ENCODE measurements at regions of chr11 and their contacts with region 1.

Region 1: DNA sequence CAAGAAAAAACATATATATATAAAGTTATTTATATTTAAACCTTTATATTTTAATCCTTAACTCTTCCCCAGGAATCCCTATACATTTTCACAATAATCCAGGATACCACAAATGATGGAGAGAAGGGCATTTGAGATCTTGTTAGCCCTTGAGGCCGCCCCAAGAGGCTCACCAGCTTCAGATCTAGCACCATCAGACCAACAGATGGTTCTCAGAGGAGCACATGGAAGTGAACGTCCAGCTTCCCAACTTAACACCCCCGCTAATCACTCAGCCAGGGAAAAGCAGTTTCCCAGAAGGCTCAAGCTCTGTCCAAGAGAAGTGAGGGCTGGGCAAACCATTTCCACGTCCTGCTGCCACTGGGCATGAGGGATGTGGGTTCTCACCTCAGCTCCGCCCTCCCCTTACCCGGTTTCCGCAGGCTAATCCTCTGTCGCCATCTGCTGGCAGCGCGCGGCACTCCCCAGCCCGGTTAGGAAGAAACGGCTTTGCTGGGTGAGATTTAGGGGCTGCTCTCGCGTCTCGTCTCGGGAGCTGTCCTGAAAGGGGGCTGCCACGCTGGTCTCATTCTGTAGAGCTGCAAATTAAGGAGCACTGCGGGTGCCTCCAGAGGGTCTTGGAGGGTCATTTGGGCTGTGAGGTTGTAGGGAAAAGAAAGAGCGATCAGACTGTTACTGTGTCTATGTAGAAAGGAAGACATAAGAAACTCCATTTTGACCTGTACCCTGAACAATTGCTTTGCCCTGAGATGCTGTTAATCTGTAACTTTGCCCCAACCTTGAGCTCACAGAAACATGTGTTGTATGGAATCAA is 6.8 kb upstream of the FAM111A start:
- DNase-seq: peak; percentile 66
- ATAC-seq: peak; percentile 100
- H3K4me3 ChIP-seq: no peak overlapping the region
- H3K27ac ChIP-seq: 0 out of 2 replicates have a peak overlapping the region, but pooled peaks have one; percentile 4
- H3K4me1 ChIP-seq: no peaks in the 10 kb centered on the region
- H3K27me3 ChIP-seq: no peaks in the 10 kb centered on the region
- CTCF ChIP-seq: peak; percentile 97
- POLR2A ChIP-seq: 0 out of 2 replicates have a peak, but pooled peaks have one; percentile 51
- RAD21 ChIP-seq: peak; percentile 98

Region 2: DNA sequence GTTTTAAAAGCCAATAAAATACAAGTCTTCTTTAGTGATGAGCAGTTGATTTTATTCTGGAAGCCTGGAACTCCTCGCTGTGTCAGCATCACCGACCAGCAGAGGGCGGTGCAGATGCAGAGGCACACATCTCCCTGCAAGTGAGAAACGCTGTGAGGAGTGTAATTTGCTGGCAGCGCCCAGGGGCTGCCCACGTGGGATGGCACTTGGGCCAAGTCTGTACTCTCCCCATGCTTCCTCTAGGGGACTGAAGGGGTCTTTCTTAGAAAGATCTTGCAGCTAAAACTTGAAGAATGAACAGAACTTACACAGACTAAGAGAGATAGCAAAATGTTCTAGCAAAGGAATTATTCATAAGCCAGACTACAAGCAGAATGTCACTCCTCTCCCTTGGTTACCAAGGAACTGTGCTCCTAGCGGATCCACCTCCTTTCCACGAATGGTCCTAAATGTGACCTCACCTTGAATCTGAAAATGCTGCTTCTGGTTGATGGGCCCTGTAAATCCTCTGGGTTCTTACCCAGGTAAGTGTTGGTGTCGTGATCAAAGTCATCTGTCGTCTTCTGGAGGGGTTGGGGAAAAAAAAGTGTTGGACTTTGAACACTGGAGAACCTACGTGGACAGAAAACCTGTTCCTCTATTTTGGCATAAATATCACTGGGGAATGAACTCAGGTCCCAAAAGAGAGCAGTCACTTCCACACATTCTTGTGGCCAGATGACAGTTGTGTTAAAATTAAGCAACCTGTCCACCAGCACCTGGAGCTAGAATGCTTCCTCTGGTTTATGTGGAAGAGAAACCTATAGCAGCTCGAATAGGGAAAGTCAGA is 481.6 kb before region 1 on chr11:
- CTCF ChIA-PET with region 1: no interaction called
- POLR2A ChIA-PET with region 1: no interaction called
- dilution Hi-C with region 1: no loop called
- in situ Hi-C with region 1: no loop called
- intact Hi-C with region 1: loop called (anchors 5 kb)
- DNase-seq: peak; percentile 72
- ATAC-seq: peak; percentile 98
- H3K4me3 ChIP-seq: no peak overlapping the region
- H3K27ac ChIP-seq: no peak overlapping the region
- H3K4me1 ChIP-seq: 0 out of 2 replicates have a peak, but pooled peaks cover 2% of the 10 kb centered on the region
- H3K27me3 ChIP-seq: no peaks in the 10 kb centered on the region
- CTCF ChIP-seq: peak; percentile 89
- POLR2A ChIP-seq: no peak
- RAD21 ChIP-seq: peak; percentile 72

Region 3: GRCh38 chr11:58845366-58845765 is 290.5 kb before region 1 on chr11:
- CTCF ChIA-PET with region 1: no interaction called
- POLR2A ChIA-PET with region 1: no interaction called
- dilution Hi-C with region 1: no loop called
- in situ Hi-C with region 1: no loop called
- intact Hi-C with region 1: loop called (anchors 1 kb)
- DNase-seq: no peak
- ATAC-seq: no peak
- H3K4me3 ChIP-seq: no peak overlapping the region
- H3K27ac ChIP-seq: no peak overlapping the region
- H3K4me1 ChIP-seq: no peaks in the 10 kb centered on the region
- H3K27me3 ChIP-seq: no peaks in the 10 kb centered on the region
- CTCF ChIP-seq: no peak
- POLR2A ChIP-seq: no peak
- RAD21 ChIP-seq: no peak

Region 4: DNA sequence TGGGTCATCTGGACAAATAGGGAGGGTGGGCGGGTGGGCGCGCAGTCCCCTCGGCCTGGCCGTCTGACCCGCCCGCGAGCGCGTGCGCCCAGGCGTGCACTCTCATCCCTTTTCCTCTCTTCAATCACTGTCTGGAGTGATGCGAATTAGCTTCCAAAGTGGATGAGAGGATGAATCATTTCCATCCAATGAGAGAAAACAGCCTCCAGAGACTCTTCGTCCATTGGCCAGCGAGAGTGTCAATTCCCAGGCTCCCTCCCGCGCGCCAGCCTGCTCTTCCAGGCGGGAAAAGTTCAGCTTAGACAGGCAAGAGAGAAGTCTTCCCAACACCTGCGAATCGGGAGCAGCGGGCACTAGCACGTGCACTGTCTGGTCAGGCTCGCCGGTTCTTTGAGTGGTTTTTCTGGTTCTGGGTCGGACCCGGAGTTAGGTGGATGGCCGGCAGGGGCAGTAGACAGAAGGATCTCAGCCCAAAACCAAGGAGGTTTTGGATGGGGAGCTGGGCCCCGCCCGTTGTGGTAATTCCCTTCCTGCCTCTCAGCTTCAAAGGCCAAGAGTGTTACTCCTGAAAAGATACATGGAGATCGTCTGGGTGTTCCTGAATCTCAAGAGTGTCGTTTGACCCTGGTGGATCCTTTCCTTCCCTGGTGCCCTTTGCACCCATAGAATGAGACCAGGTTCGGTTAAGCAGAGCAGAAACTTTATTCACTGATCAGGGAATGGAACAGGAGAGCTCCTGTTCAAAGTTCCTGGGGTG is 230.0 kb before region 1 on chr11:
- CTCF ChIA-PET with region 1: interaction called, 3 read pairs
- POLR2A ChIA-PET with region 1: no interaction called
- dilution Hi-C with region 1: no loop called
- in situ Hi-C with region 1: no loop called
- intact Hi-C with region 1: loop called (anchors 1 kb)
- DNase-seq: peak; percentile 91
- ATAC-seq: peak; percentile 94
- H3K4me3 ChIP-seq: peak overlapping the region; percentile 75
- H3K27ac ChIP-seq: no peak overlapping the region; the same call in 1 of the 2 replicates
- H3K4me1 ChIP-seq: no peaks in the 10 kb centered on the region; the same call in 1 of the 2 replicates
- H3K27me3 ChIP-seq: no peaks in the 10 kb centered on the region
- CTCF ChIP-seq: peak; percentile 49
- POLR2A ChIP-seq: no peak
- RAD21 ChIP-seq: no peak

Region 5: GRCh38 chr11:59053387-59053786 is 82.5 kb before region 1 on chr11:
- CTCF ChIA-PET with region 1: interaction called, 3 read pairs
- POLR2A ChIA-PET with region 1: no interaction called
- dilution Hi-C with region 1: no loop called
- in situ Hi-C with region 1: loop called (anchors 5 kb)
- intact Hi-C with region 1: loop called (anchors 1 kb)
- DNase-seq: peak; percentile 49
- ATAC-seq: peak; percentile 69
- H3K4me3 ChIP-seq: no peak overlapping the region
- H3K27ac ChIP-seq: no peak overlapping the region
- H3K4me1 ChIP-seq: no peaks in the 10 kb centered on the region
- H3K27me3 ChIP-seq: no peaks in the 10 kb centered on the region; the same call in 1 of the 2 replicates
- CTCF ChIP-seq: peak; percentile 53
- POLR2A ChIP-seq: no peak
- RAD21 ChIP-seq: peak; percentile 29; the same call in 1 of the 2 replicates

Region 6: GRCh38 chr11:59097113-59097708 is 38.6 kb before region 1 on chr11:
- CTCF ChIA-PET with region 1: interaction called, 8 read pairs
- POLR2A ChIA-PET with region 1: no interaction called
- dilution Hi-C with region 1: no loop called
- in situ Hi-C with region 1: no loop called
- intact Hi-C with region 1: loop called (anchors 1 kb)
- DNase-seq: peak; percentile 62
- ATAC-seq: peak; percentile 81
- H3K4me3 ChIP-seq: no peak overlapping the region
- H3K27ac ChIP-seq: no peak overlapping the region
- H3K4me1 ChIP-seq: no peaks in the 10 kb centered on the region
- H3K27me3 ChIP-seq: peaks cover 9% of the 10 kb centered on the region
- CTCF ChIP-seq: peak; percentile 69
- POLR2A ChIP-seq: no peak
- RAD21 ChIP-seq: peak; percentile 52

Region 7: GRCh38 chr11:59164028-59164427 is 28.2 kb after region 1 on chr11:
- CTCF ChIA-PET with region 1: interaction called, 11 read pairs
- POLR2A ChIA-PET with region 1: no interaction called
- dilution Hi-C with region 1: no loop called
- in situ Hi-C with region 1: no loop called
- intact Hi-C with region 1: no loop called
- DNase-seq: no peak
- ATAC-seq: no peak
- H3K4me3 ChIP-seq: no peak overlapping the region
- H3K27ac ChIP-seq: no peak overlapping the region
- H3K4me1 ChIP-seq: no peaks in the 10 kb centered on the region
- H3K27me3 ChIP-seq: peaks cover 13% of the 10 kb centered on the region
- CTCF ChIP-seq: no peak
- POLR2A ChIP-seq: no peak
- RAD21 ChIP-seq: no peak

Measured in IMR-90 (cell line).